Naive thymus-derived CD4-positive, alpha-beta T cell (primary cell): ENCODE measurements at regions of chr17 and their contacts with region 1.

Region 1: DNA sequence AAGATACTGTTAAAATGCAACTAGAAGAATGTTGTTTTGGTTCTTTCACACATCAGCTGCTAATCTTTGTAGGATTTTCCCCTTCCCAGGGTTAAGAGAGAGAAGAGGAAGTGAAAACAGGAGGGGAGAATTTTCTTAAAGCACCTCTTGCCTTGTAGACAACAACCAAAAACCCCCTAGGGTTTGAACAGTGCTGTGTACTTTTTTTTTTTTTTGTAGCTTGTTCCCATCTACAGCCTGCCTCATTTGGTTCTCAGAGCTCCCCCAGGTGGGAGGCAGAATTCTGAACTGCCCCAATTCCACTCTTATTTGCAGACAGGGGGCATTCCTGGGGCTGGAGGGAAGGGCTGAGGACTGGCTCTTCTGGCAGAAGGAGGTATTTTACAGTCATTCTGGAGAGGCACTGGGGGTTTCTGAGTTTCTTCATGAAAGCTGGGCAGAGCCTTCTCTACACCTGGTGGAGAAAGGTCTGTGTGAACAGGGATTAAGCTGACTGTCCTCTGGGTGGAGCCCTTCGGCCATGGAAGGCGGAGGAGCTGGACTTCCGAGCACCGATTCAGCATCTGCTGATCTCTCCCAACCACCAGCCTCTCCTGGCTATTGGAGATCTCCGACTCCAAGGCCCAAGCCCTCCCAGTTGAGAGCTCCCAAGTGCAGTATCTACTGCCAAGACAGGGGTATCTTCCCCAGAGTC is 32.2 kb downstream of the SMARCE1 start:
- DNase-seq: peak in 8 of 9 donors; percentile 24 to 82 (median 70)
- ATAC-seq: peak; percentile 79
- H3K4me3 ChIP-seq: peak overlapping the region; percentile 31
- H3K4me3 Mint-ChIP-seq: peak overlapping the region; percentile 71 to 88 (median 82)
- H3K27ac ChIP-seq: peak overlapping the region; percentile 94
- H3K27ac Mint-ChIP-seq: peak overlapping the region; percentile 90 to 100 (median 98)
- H3K4me1 ChIP-seq: peaks cover 50 to 77% of the 10 kb centered on the region in 2 donors
- H3K4me1 Mint-ChIP-seq: peaks cover 41 to 84% (median 79%) of the 10 kb centered on the region in 7 donors
- H3K27me3 ChIP-seq: no peaks in the 10 kb centered on the region
- H3K27me3 Mint-ChIP-seq: no peaks in the 10 kb centered on the region

Region 2: GRCh38 chr17:40317880-40318829 is 297.3 kb before region 1 on chr17:
- CTCF ChIA-PET with region 1: no interaction called
- POLR2A ChIA-PET with region 1: interaction called, 3 read pairs
- intact Hi-C with region 1: loop called in 1 of 2 experiments (anchors 2 kb)
- DNase-seq: peak; percentile 81 to 91 (median 90)
- ATAC-seq: peak; percentile 76
- H3K4me3 ChIP-seq: peak overlapping the region; percentile 55
- H3K4me3 Mint-ChIP-seq: peak overlapping the region; percentile 89 to 98 (median 97)
- H3K27ac ChIP-seq: peak overlapping the region; percentile 96
- H3K27ac Mint-ChIP-seq: peak overlapping the region; percentile 98 to 100 (median 99)
- H3K4me1 ChIP-seq: peaks cover 49 to 68% of the 10 kb centered on the region in 2 donors
- H3K4me1 Mint-ChIP-seq: peaks cover 32 to 88% (median 74%) of the 10 kb centered on the region in 7 donors
- H3K27me3 ChIP-seq: no peaks in the 10 kb centered on the region
- H3K27me3 Mint-ChIP-seq: peaks cover 0 to 8% (median 0%) of the 10 kb centered on the region in 5 donors

Region 3: GRCh38 chr17:40417609-40418427 is 197.6 kb before region 1 on chr17 and contains the start of gene TOP2A:
- CTCF ChIA-PET with region 1: interaction called, 4 read pairs
- POLR2A ChIA-PET with region 1: interaction called, 3 read pairs
- intact Hi-C with region 1: loop called in 1 of 2 experiments (anchors 1 kb)
- DNase-seq: peak; percentile 92 to 98 (median 98)
- ATAC-seq: peak; percentile 100
- H3K4me3 ChIP-seq: peak within 1 kb of the TSS; percentile 96
- H3K4me3 Mint-ChIP-seq: peak within 1 kb of the TSS; percentile 87 to 99 (median 92)
- H3K27ac ChIP-seq: peak within 1 kb of the TSS; percentile 71
- H3K27ac Mint-ChIP-seq: peak within 1 kb of the TSS; percentile 75 to 97 (median 90)
- H3K4me1 ChIP-seq: peaks cover 0 to 16% of the 10 kb centered on the region in 2 donors
- H3K4me1 Mint-ChIP-seq: peaks cover 6 to 41% (median 23%) of the 10 kb centered on the region in 7 donors
- H3K27me3 ChIP-seq: peaks cover 0 to 5% of the 10 kb centered on the region in 2 donors
- H3K27me3 Mint-ChIP-seq: peaks cover 0 to 2% (median 0%) of the 10 kb centered on the region in 5 donors
- total RNA-seq, gene TOP2A: 0.54 to 273 (median 1.2) TPM

Region 4: DNA sequence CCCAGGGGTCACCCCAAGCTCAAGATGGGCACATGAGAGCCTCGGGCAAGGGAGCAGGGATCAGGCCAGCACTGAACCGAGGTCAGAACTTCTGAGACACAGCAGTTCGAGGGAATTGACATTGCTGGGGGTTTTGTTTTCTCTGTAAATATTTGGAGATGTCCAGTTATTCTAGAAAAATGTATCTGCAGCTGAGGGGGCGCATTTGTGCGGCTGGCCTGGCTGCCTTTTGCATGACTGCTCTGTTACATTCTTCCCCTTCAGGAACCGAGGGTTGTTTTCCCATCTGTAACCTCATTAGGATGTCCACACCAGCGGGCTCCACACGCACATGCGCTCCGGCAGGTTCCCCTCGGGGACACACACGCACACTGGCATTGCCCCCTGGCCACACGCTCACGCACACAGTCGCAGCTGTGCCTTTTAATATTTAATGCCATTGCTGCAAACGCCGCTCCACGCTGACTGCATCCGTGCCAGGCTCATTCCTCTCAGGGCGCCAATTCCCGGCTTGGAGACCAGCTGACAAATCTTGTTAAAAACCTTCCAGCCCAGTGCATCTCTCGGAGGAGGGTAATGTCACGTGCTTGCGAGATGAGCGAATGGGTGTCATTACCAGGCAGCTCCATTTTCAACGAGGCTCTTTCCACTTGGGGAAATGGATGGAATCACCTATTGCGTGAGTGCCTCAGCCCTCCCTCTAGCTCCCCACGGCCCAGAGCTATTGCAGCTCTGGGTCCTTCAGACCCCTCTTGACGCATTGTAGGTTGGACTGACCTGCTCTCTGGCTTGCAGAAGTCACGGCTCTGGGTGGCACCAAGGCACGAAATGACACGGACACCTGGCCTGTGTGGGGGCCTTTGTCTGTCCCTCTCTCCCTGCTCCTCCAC is 63.3 kb before region 1 on chr17:
- CTCF ChIA-PET with region 1: interaction called, 425 read pairs
- POLR2A ChIA-PET with region 1: interaction called, 2,132 read pairs
- intact Hi-C with region 1: loop called in 1 of 2 experiments (anchors 1 kb)
- DNase-seq: peak in 2 of 9 donors; percentile 33 to 43
- ATAC-seq: peak; percentile 2
- H3K4me3 ChIP-seq: no peak overlapping the region
- H3K4me3 Mint-ChIP-seq: peak overlapping the region in 9 of 10 donors; percentile 4 to 100 (median 58)
- H3K27ac ChIP-seq: peak overlapping the region; percentile 79
- H3K27ac Mint-ChIP-seq: peak overlapping the region; percentile 76 to 100 (median 99)
- H3K4me1 ChIP-seq: peaks cover 52 to 93% of the 10 kb centered on the region in 2 donors
- H3K4me1 Mint-ChIP-seq: peaks cover 59 to 100% (median 98%) of the 10 kb centered on the region in 7 donors
- H3K27me3 ChIP-seq: no peaks in the 10 kb centered on the region
- H3K27me3 Mint-ChIP-seq: no peaks in the 10 kb centered on the region

Region 5: GRCh38 chr17:40582328-40582901 is 33.0 kb before region 1 on chr17:
- CTCF ChIA-PET with region 1: interaction called, 30 read pairs
- POLR2A ChIA-PET with region 1: interaction called, 68 read pairs
- intact Hi-C with region 1: loop called in 1 of 2 experiments (anchors 1 kb)
- DNase-seq: peak in 7 of 9 donors; percentile 75 to 90 (median 86)
- ATAC-seq: peak; percentile 91
- H3K4me3 ChIP-seq: peak overlapping the region; percentile 46
- H3K4me3 Mint-ChIP-seq: peak overlapping the region; percentile 73 to 88 (median 77)
- H3K27ac ChIP-seq: peak overlapping the region; percentile 84
- H3K27ac Mint-ChIP-seq: peak overlapping the region; percentile 91 to 99 (median 96)
- H3K4me1 ChIP-seq: peaks cover 27 to 76% of the 10 kb centered on the region in 2 donors
- H3K4me1 Mint-ChIP-seq: peaks cover 63 to 100% (median 97%) of the 10 kb centered on the region in 7 donors
- H3K27me3 ChIP-seq: no peaks in the 10 kb centered on the region
- H3K27me3 Mint-ChIP-seq: no peaks in the 10 kb centered on the region

Region 6: GRCh38 chr17:40647624-40648383 is 32.4 kb after region 1 on chr17 and contains the start of gene SMARCE1:
- CTCF ChIA-PET with region 1: interaction called, 6 read pairs
- POLR2A ChIA-PET with region 1: interaction called, 6 read pairs
- intact Hi-C with region 1: loop called in 1 of 2 experiments (anchors 1 kb)
- DNase-seq: peak; percentile 63 to 81 (median 76)
- ATAC-seq: peak; percentile 87
- H3K4me3 ChIP-seq: peak within 1 kb of the TSS; percentile 89
- H3K4me3 Mint-ChIP-seq: peak within 1 kb of the TSS; percentile 86 to 99 (median 90)
- H3K27ac ChIP-seq: peak within 1 kb of the TSS; percentile 95
- H3K27ac Mint-ChIP-seq: peak within 1 kb of the TSS; percentile 86 to 100 (median 98)
- H3K4me1 ChIP-seq: peaks cover 11 to 33% of the 10 kb centered on the region in 2 donors
- H3K4me1 Mint-ChIP-seq: peaks cover 27 to 64% (median 46%) of the 10 kb centered on the region in 7 donors
- H3K27me3 ChIP-seq: no peaks in the 10 kb centered on the region
- H3K27me3 Mint-ChIP-seq: no peaks in the 10 kb centered on the region
- total RNA-seq, gene SMARCE1: 65.4 to 101 (median 79.2) TPM

Region 7: DNA sequence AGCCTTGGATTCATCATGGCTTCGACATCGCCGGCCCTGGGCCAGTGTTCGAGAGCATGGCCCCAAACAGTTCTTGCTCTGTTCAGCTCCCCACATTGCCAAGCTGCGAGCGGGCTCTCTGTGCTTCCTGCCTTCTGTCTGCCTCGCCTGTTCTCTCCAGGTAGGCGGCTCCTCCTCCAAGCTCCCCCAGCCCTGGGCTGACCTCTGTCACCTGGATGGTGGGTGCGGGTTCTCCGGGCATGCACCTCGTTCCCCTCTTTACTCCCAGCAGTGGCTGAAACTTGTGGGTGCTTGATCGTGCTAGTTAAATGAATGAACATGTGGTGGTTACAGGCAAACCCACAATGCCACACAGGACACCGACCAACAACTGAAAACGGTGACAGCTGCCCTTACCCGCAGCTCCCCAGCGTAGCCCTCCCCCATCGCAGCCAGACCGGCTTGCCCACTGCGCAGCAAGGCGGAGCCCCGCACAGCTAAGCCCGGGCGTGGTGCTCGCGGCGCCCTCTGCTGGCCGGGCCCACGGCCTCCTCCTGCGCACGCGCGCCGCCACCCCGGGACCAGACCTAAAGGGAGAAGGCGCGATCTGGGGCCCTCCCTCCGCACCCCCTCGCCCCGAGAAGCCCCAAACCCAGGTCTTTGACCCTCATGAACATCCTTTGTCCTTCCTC is 1050.3 kb after region 1 on chr17:
- CTCF ChIA-PET with region 1: interaction called, 3 read pairs
- POLR2A ChIA-PET with region 1: no interaction called
- intact Hi-C with region 1: loop called in 1 of 2 experiments (anchors 1 kb)
- DNase-seq: peak; percentile 81 to 96 (median 90)
- ATAC-seq: peak; percentile 87
- H3K4me3 ChIP-seq: peak overlapping the region; percentile 87
- H3K4me3 Mint-ChIP-seq: peak overlapping the region; percentile 85 to 95 (median 92)
- H3K27ac ChIP-seq: peak overlapping the region; percentile 97
- H3K27ac Mint-ChIP-seq: peak overlapping the region; percentile 88 to 100 (median 96)
- H3K4me1 ChIP-seq: peaks cover 4 to 7% of the 10 kb centered on the region in 2 donors
- H3K4me1 Mint-ChIP-seq: peaks cover 17 to 54% (median 21%) of the 10 kb centered on the region in 7 donors
- H3K27me3 ChIP-seq: no peaks in the 10 kb centered on the region
- H3K27me3 Mint-ChIP-seq: peaks cover 0 to 13% (median 0%) of the 10 kb centered on the region in 5 donors